Activated T-helper 2 cell treated with anti-CD3 and anti-CD28 coated beads, Interferon-gamma antibody, Interleukin-2, Interleukin-4, amounts not matched to agents 10 μg/mL and 5 μg/mL and 100 μg/mL, durations not matched to agents 14 hours and 24 hours and 36 hours (primary cell): ENCODE measurements at regions of chr22 and their contacts with region 1.

Region 1: GRCh38 chr22:50030297-50031188 is 18.0 kb upstream of the IL17REL start:
- DNase-seq: peak; percentile 71
- H3K4me3 Mint-ChIP-seq: no peak overlapping the region
- H3K27ac Mint-ChIP-seq: no peak overlapping the region
- H3K4me1 Mint-ChIP-seq: peaks cover 9% of the 10 kb centered on the region
- H3K27me3 Mint-ChIP-seq: peaks cover 4% of the 10 kb centered on the region

Region 2: GRCh38 chr22:49767355-49768062 is 263.0 kb before region 1 on chr22:
- intact Hi-C with region 1: loop called (anchors 1 kb)
- DNase-seq: no peak
- H3K4me3 Mint-ChIP-seq: no peak overlapping the region
- H3K27ac Mint-ChIP-seq: no peak overlapping the region
- H3K4me1 Mint-ChIP-seq: peaks cover 5% of the 10 kb centered on the region
- H3K27me3 Mint-ChIP-seq: no peaks in the 10 kb centered on the region

Region 3: GRCh38 chr22:49992921-49993648 is 37.5 kb before region 1 on chr22:
- intact Hi-C with region 1: loop called (anchors 1 kb)
- DNase-seq: peak; percentile 49
- H3K4me3 Mint-ChIP-seq: no peak overlapping the region
- H3K27ac Mint-ChIP-seq: no peak overlapping the region
- H3K4me1 Mint-ChIP-seq: peaks cover 3% of the 10 kb centered on the region
- H3K27me3 Mint-ChIP-seq: peaks cover 7% of the 10 kb centered on the region